Activated CD8-positive, alpha-beta T cell treated with anti-CD3 and anti-CD28 coated beads, Interleukin-2, amount 10 ng/mL, durations not matched to agents 7 days and 5 days (primary cell): ENCODE measurements at regions of chr1 and their contacts with region 1.

Region 1: DNA sequence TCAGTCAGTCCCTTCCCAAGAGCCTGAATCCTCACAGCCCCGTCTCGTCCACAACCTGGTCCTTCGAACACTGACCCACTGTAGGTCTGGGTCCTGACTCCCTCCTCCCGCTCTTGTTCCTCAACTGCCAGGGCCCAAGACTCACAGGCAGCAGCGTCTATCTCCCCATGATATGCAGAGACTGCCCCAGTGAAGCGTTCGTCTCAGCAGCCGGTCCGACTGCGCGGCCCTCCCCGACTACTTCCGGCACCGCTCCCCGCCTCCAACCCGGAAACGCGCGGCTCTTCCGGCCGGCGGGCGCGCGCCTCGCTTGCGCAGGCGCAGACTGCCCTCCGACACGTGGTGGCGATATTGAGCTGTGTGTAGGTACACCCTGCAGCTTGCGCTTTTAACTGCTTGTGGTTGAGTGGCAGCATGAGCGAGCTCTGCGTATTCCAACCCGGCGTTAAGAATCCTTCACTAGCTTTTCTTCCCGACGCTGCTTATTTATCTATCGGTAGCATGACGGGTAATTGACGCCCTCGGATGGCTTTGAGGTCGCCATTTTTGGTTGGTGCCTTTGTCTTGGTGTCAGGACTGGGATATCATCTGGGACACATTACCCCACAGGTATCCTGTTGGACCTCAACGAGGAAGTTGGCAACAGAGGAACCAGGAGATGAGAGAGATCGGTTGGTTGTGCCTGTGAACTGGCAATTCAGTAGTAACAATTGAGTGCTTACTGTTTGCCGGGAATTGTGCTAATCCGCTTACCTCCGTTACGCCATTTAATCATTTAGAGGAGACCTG is at the start of gene TAF12:
- DNase-seq: peak; percentile 94
- ATAC-seq: peak; percentile 90
- H3K4me3 Mint-ChIP-seq: peak within 1 kb of the TSS; percentile 99
- H3K27ac Mint-ChIP-seq: peak within 1 kb of the TSS; percentile 99
- H3K4me1 Mint-ChIP-seq: peaks cover 51% of the 10 kb centered on the region
- H3K27me3 Mint-ChIP-seq: no peaks in the 10 kb centered on the region
- total RNA-seq, gene TAF12: 35.7 to 39.3 TPM

Region 2: DNA sequence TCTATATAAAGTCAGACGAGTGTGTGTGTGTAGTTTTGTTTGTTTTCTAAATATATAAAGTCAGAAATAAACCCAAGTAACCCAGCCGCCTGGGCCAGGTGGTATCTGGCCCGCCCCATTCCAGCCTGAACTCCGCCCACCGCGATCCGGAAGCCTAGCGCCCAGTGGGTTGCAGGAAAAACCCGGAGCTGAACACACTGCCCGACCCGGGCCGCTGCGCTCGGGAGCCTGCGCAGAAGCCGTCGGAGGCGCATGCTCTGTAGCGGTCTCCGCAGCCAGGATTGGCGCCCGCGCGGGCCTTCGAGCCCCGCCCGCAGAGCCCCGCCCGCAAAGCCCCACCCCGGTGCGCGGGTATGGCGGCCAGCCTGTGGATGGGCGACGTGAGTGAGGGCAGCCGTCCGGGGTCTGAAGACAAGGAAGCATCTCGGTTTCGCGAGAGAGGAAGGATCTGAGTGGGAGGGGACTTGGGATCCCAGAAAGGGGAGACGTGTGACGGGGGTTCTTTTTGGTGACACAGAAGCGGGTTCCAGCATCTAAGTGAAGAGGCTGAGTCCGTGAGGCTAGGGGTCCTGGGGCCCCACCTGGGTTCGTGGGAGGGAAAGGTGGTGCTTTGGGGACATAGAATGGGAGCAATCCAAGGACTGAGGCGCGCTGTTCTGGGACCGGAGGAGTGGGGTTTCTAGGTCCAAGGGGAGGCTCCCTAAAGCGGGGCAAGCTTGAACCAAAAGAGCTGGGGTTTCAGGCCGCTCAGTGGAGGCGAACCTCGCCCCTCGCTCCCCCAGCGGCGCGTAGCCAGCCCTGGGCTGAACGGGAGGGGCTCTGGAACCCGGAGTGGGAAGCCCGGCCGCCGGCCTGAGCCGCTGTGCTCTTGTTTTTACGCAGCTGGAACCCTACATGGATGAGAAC is 90.0 kb before region 1 on chr1 and contains the start of gene TRNAU1AP:
- CTCF ChIA-PET with region 1: interaction called, 4 read pairs
- POLR2A ChIA-PET with region 1: interaction called, 15 read pairs
- DNase-seq: peak; percentile 98
- ATAC-seq: peak; percentile 95
- H3K4me3 Mint-ChIP-seq: peak within 1 kb of the TSS; percentile 98
- H3K27ac Mint-ChIP-seq: peak within 1 kb of the TSS; percentile 97
- H3K4me1 Mint-ChIP-seq: peaks cover 14% of the 10 kb centered on the region
- H3K27me3 Mint-ChIP-seq: no peaks in the 10 kb centered on the region
- total RNA-seq, gene TRNAU1AP: 73.2 to 77.7 TPM

Region 3: DNA sequence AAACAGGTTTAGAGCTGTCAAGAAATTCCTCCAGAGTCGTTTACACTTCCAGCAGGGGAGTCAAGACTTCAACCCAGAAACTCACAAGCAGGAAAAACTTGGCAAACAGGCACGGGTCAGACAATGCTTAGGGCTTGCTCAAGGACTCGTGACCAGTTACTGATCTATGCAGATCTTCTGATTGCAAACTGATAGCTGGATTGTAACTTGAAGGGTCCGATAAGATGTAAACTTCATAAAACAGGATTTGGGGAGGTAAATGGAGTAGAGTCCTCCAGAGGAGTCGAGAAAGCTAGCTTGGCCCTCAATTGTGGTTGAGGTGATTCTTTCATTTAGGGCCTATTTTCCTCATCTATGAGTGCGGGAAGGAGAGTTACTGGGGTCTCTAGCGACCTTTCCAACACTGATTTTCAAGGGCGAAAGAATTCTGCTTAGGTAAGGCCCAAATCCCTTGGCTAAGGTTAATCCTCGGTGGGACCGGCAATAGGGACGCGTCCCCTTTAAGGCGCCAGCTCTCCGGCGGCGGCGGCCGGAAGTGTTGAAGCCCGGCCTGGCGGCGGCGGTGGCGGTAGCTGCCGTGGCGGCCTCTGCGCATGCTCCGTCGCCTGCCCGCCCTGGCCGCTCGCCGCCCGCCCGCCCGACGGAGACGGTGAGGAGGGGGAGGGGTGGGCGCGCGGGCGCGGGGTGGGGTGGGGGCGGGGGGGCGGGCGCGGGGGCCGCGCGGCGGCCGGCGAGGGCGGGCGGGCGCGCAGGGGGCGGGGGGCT is 25.3 kb after region 1 on chr1 and contains the start of gene GMEB1:
- CTCF ChIA-PET with region 1: interaction called, 16 read pairs
- POLR2A ChIA-PET with region 1: interaction called, 185 read pairs
- DNase-seq: peak; percentile 89
- ATAC-seq: peak; percentile 76
- H3K4me3 Mint-ChIP-seq: peak within 1 kb of the TSS; percentile 87
- H3K27ac Mint-ChIP-seq: peak within 1 kb of the TSS; percentile 96
- H3K4me1 Mint-ChIP-seq: peaks cover 10% of the 10 kb centered on the region
- H3K27me3 Mint-ChIP-seq: no peaks in the 10 kb centered on the region
- total RNA-seq, gene GMEB1: 35.5 to 36.4 TPM

Region 4: GRCh38 chr1:28956038-28956464 is 313.0 kb after region 1 on chr1:
- CTCF ChIA-PET with region 1: no interaction called
- POLR2A ChIA-PET with region 1: no interaction called
- DNase-seq: no peak
- ATAC-seq: no peak
- H3K4me3 Mint-ChIP-seq: no peak overlapping the region
- H3K27ac Mint-ChIP-seq: no peak overlapping the region
- H3K4me1 Mint-ChIP-seq: peaks cover 7% of the 10 kb centered on the region
- H3K27me3 Mint-ChIP-seq: no peaks in the 10 kb centered on the region